PC-9 (cell line): ENCODE measurements at regions of chr1 and their contacts with region 1.

Region 1: GRCh38 chr1:205294175-205294913 is 27.2 kb downstream of the NUAK2 start:
- DNase-seq: peak in 1 of 2 experiments; percentile 43
- H3K4me3 ChIP-seq: no peak overlapping the region
- H3K27ac ChIP-seq: peak overlapping the region; percentile 70
- H3K4me1 ChIP-seq: peaks cover 56% of the 10 kb centered on the region
- H3K27me3 ChIP-seq: no peaks in the 10 kb centered on the region
- CTCF ChIP-seq: no peak

Region 2: GRCh38 chr1:205369701-205370123 is 75.4 kb after region 1 on chr1:
- CTCF ChIA-PET with region 1: no interaction called
- POLR2A ChIA-PET with region 1: no interaction called
- intact Hi-C with region 1: no loop called
- DNase-seq: no peak
- H3K4me3 ChIP-seq: no peak overlapping the region
- H3K27ac ChIP-seq: no peak overlapping the region
- H3K4me1 ChIP-seq: peaks cover 12% of the 10 kb centered on the region
- H3K27me3 ChIP-seq: peaks cover 17% of the 10 kb centered on the region; the same call in 1 of the 2 replicates
- CTCF ChIP-seq: no peak

Region 3: DNA sequence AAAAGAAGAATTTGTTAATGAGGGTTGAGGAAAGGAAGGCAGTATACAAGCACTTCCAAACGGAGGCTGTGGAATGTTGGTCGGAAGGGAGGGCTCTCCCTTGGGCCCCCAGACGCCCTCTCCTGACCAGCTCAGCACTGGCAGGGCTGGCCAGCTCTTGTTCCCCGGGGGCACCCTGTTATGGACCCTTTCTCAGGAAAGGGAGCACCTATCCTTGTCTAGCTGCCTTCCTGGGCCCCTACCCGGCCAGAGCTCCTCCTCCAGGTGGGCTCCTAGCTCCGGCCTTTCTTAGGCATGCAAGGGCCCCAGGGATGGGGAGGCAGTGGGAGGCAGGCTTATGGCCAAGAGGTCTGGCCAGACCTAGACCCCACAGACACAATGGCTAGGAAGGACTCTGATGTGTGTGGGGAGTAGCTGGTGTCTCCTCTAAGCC is 160.6 kb after region 1 on chr1:
- CTCF ChIA-PET with region 1: no interaction called
- POLR2A ChIA-PET with region 1: interaction called, 11 read pairs
- intact Hi-C with region 1: no loop called
- DNase-seq: no peak
- H3K4me3 ChIP-seq: no peak overlapping the region
- H3K27ac ChIP-seq: no peak overlapping the region
- H3K4me1 ChIP-seq: peaks cover 23% of the 10 kb centered on the region
- H3K27me3 ChIP-seq: peaks cover 46% of the 10 kb centered on the region
- CTCF ChIP-seq: no peak